T-cell (primary cell): ENCODE measurements at regions of chr1 and their contacts with region 1.

Region 1: DNA sequence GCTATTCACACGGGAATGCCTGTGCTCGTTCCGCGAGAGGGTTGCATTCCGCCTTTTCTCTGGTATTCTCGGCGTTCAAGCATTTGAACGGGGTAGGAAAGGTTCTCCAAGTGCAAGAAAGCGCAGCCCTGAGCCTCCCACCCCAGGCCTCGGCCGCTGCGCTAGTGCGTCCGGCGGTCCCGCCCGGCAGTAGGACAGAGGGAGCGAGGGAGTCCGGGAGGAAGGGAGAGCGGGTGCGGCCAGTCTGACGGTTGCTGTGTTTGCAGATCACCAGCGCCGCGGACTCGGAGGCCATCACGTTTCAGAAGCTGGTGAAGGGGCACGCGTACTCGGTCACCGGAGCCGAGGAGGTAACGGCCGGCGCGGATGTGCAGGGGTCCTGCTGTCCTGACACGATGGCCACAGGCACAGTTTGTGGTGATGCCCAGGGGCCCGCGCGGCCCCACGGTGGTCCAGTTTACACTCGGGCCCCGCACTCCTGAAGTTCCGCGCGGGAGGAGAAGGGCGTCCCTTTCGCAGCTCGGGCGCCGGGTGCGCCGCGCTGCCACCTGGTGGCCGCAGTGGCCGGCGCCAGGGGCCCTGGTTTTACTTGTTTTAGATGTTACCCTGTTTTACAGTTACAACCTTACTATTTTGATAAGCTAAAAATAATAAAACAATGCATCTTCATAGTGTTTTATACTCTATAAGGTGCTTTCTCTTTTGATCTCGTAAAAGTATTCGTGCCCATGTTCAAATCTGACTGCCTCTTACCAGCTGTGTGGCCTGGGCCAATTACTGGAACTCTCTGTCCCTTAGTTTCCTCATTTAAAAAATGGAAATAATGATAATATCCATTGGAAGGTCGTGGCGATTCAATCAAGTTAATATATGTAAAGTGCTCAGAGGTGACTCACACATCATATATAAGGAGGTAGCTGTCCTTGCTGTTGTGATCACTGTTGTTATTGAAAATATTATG is 36.7 kb downstream of the CAPN2 start:
- DNase-seq: peak; percentile 19 to 81 (median 60)
- ATAC-seq: peak; percentile 79 to 88 (median 84)
- H3K4me3 ChIP-seq: peak overlapping the region; percentile 49 to 70
- H3K4me3 Mint-ChIP-seq: peak overlapping the region; percentile 68 to 79 (median 75)
- H3K27ac ChIP-seq: no peak overlapping the region
- H3K27ac Mint-ChIP-seq: peak overlapping the region; percentile 61 to 63
- H3K4me1 ChIP-seq: peaks cover 0 to 13% of the 10 kb centered on the region in 2 experiments
- H3K4me1 Mint-ChIP-seq: peaks cover 14 to 24% (median 14%) of the 10 kb centered on the region in 3 donors
- H3K27me3 ChIP-seq: no peaks in the 10 kb centered on the region
- H3K27me3 Mint-ChIP-seq: no peaks in the 10 kb centered on the region

Region 2: DNA sequence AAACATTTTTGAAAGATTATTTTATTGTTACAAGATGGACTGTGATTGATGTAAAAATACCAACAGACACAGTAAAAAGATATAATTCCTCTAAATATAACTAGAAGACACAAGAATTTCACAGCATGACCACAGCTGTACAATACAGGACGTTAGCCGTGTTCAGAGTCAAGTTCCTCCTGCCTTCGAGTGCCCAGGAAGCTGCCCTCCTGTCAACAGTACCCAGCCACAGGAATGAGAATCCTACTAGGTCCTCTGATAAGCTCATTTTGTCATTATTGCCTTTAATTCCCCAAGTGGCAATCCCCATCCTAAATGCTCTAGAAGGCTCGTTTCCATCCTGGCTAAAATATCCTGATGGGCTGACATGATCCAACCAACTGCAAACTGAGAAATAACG is 53.1 kb before region 1 on chr1:
- CTCF ChIA-PET with region 1: interaction called, 17 to 56 read pairs
- POLR2A ChIA-PET with region 1: no interaction called
- DNase-seq: no peak
- ATAC-seq: no peak
- H3K4me3 ChIP-seq: no peak overlapping the region
- H3K4me3 Mint-ChIP-seq: no peak overlapping the region
- H3K27ac ChIP-seq: no peak overlapping the region
- H3K27ac Mint-ChIP-seq: no peak overlapping the region
- H3K4me1 ChIP-seq: peaks cover 0 to 5% of the 10 kb centered on the region in 2 experiments
- H3K4me1 Mint-ChIP-seq: peaks cover 6 to 9% (median 7%) of the 10 kb centered on the region in 3 donors
- H3K27me3 ChIP-seq: peaks cover 0 to 14% of the 10 kb centered on the region in 2 experiments
- H3K27me3 Mint-ChIP-seq: peaks cover 0 to 4% of the 10 kb centered on the region in 2 donors

Region 3: DNA sequence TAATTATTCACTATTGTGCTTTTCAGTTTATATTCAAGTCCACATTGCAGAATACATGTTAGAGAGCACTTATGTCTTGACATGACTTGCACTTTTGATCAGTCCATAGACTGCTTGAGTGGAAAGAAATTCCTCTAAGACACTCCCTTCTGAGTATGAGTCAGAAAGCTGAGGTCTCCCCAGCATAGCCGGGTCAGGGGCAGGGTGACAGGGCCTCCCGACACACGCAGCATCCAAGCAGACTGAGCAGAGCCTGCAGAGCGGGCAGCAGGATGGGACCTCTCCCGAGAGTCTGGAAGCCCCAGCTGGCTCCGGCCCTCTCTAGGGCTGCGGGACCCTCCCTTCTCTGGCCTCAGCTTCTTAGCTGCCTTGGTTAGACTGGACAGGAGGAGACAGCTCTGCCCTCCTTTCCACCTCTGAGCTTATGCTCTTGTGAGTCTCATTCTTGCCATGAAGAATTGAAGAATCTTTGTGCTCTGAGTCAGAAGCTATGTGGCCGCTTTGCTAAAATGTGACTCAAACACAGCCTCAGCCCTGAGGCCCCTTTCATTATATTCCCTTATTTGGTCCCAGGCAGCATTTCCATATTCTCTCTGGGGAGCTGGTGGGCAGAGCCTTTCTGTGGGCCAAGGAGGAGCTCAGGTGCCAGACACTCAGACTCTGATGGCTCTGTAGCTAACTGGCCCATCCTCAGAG is 48.0 kb before region 1 on chr1:
- CTCF ChIA-PET with region 1: interaction called, 17 to 56 read pairs
- POLR2A ChIA-PET with region 1: no interaction called
- DNase-seq: no peak
- ATAC-seq: no peak
- H3K4me3 ChIP-seq: no peak overlapping the region
- H3K4me3 Mint-ChIP-seq: no peak overlapping the region
- H3K27ac ChIP-seq: no peak overlapping the region
- H3K27ac Mint-ChIP-seq: no peak overlapping the region
- H3K4me1 ChIP-seq: peaks cover 0 to 5% of the 10 kb centered on the region in 2 experiments
- H3K4me1 Mint-ChIP-seq: peaks cover 6 to 15% (median 13%) of the 10 kb centered on the region in 3 donors
- H3K27me3 ChIP-seq: peaks cover 0 to 14% of the 10 kb centered on the region in 2 experiments
- H3K27me3 Mint-ChIP-seq: peaks cover 0 to 4% of the 10 kb centered on the region in 2 donors